WTC11 (cell line): ENCODE measurements at regions of chr17 and their contacts with region 1.

Region 1: DNA sequence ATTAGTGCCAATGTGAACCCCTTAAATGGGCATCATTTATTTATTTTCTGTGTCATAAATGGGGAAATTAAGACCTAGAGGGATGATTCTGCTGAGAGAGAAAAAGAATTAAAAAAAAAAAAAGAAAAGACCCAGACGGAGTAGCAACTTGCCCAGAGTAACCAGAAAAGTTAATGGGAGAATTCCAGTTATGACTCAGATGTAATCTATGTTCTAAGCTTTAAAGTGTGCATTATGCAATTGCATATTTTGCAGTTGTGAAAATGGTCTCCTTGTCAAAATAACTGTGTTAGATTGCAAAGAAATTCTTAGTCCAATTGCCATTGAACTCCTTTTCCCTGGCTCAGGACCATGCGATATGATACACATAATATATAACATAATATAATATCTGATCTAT is 38.6 kb upstream of the TBX2 start:
- DNase-seq: no peak
- ATAC-seq: no peak
- H3K4me3 Mint-ChIP-seq: no peak overlapping the region
- H3K27ac Mint-ChIP-seq: no peak overlapping the region
- H3K4me1 Mint-ChIP-seq: peaks cover 6% of the 10 kb centered on the region
- H3K27me3 Mint-ChIP-seq: no peaks in the 10 kb centered on the region; the same call in 1 of the 2 replicates
- CTCF ChIP-seq: no peak

Region 2: GRCh38 chr17:60971515-60972369 is 389.3 kb before region 1 on chr17:
- CTCF ChIA-PET with region 1: interaction called, 10 read pairs
- POLR2A ChIA-PET with region 1: no interaction called
- DNase-seq: peak; percentile 49
- ATAC-seq: peak; percentile 89
- H3K4me3 Mint-ChIP-seq: no peak overlapping the region
- H3K27ac Mint-ChIP-seq: no peak overlapping the region
- H3K4me1 Mint-ChIP-seq: peaks cover 6% of the 10 kb centered on the region
- H3K27me3 Mint-ChIP-seq: no peaks in the 10 kb centered on the region
- CTCF ChIP-seq: peak; percentile 54

Region 3: DNA sequence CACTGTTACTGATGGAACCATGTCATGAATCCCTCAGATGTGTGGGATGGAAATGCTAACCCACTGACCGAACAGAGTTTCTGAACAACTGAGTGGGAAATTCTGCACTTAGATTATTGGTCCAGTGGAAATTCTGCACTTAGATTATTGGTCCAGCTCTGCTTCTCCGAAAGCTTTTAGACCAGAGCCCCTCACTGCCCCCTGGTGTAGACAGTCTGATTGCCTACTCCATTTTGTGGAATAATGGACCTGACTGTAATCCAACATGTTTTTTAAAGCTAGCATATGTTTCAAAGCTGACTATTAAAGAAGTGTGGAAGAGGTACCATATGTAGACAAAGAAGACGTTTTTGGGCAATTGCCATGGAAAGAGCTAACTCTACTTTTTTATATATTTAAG is 11.7 kb before region 1 on chr17:
- CTCF ChIA-PET with region 1: interaction called, 10 read pairs
- POLR2A ChIA-PET with region 1: interaction called, 3 read pairs
- DNase-seq: no peak
- ATAC-seq: no peak
- H3K4me3 Mint-ChIP-seq: no peak overlapping the region
- H3K27ac Mint-ChIP-seq: no peak overlapping the region
- H3K4me1 Mint-ChIP-seq: peaks cover 22% of the 10 kb centered on the region
- H3K27me3 Mint-ChIP-seq: no peaks in the 10 kb centered on the region
- CTCF ChIP-seq: peak; percentile 19; the same call in 1 of the 2 replicates